Prostate gland (tissue), 2 donors: ENCODE measurements at regions of chr10 and their contacts with region 1.

Region 1: GRCh38 chr10:73529089-73529832 is 33.4 kb upstream of the PPP3CB start:
- DNase-seq: peak; percentile 71
- H3K4me3 ChIP-seq: no peak overlapping the region
- H3K27ac ChIP-seq: no peak overlapping the region
- H3K4me1 ChIP-seq: no peaks in the 10 kb centered on the region
- H3K27me3 ChIP-seq: no peaks in the 10 kb centered on the region
- CTCF ChIP-seq: peak; percentile 64 to 96 (median 90)
- POLR2A ChIP-seq: no peak

Region 2: DNA sequence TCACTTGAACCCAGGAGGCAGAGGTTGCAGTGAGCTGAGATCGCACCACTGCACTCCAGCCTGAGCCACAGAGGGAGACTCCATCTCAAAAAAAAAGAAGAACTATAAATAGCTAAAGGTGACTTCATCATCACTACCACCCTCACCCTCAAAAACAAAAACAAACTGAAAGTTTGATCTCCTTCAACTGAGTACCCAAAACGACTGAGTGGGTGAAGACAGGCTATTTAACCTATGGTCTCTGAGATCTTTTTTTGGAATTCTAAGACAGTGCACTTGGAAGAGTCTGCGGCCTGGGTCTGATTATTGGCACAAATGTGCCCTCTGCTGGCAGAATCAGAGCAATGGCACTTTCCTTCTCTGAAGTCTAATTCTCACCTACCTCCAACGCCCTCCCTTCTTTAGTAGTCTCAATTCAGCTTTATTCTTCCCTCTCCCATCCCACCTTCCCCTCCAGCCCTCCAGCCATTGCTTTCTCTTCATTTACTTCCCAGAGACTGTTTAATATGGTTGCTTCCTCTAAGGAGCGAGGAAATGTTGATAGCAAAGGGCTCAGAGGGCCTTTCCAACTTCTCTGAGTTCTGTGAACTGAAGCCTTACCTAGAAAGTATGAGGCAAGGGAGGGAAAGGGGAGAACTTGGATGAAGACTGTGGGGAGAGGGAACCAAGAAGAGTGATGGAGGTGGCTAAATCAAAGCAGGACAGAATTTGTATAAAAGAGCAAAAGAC is 114.9 kb after region 1 on chr10:
- intact Hi-C with region 1: loop called (anchors 1 kb)
- DNase-seq: peak; percentile 45
- H3K4me3 ChIP-seq: no peak overlapping the region
- H3K27ac ChIP-seq: no peak overlapping the region
- H3K4me1 ChIP-seq: peaks cover 5% of the 10 kb centered on the region
- H3K27me3 ChIP-seq: no peaks in the 10 kb centered on the region
- CTCF ChIP-seq: peak; percentile 82 to 95 (median 91)
- POLR2A ChIP-seq: no peak